ENCODE measurements at regions of chr9 and their contacts with region 1.

Region 1: GRCh38 chr9:2014696-2015580 is at the start of gene SMARCA2:
- DNase-seq: peak; percentile 92 to 98 (median 97)
- ATAC-seq: peak; percentile 76 to 80
- H3K4me3 Mint-ChIP-seq: peak within 1 kb of the TSS; percentile 93 to 100 (median 99)
- H3K27ac Mint-ChIP-seq: peak within 1 kb of the TSS; percentile 95 to 100 (median 99)
- H3K4me1 Mint-ChIP-seq: peaks cover 15 to 39% (median 30%) of the 10 kb centered on the region in 4 donors
- H3K27me3 Mint-ChIP-seq: peaks cover 0 to 6% (median 0%) of the 10 kb centered on the region in 5 donors
- polyA plus RNA-seq, gene SMARCA2: 36.1 to 78.7 (median 37.9) TPM

Region 2: DNA sequence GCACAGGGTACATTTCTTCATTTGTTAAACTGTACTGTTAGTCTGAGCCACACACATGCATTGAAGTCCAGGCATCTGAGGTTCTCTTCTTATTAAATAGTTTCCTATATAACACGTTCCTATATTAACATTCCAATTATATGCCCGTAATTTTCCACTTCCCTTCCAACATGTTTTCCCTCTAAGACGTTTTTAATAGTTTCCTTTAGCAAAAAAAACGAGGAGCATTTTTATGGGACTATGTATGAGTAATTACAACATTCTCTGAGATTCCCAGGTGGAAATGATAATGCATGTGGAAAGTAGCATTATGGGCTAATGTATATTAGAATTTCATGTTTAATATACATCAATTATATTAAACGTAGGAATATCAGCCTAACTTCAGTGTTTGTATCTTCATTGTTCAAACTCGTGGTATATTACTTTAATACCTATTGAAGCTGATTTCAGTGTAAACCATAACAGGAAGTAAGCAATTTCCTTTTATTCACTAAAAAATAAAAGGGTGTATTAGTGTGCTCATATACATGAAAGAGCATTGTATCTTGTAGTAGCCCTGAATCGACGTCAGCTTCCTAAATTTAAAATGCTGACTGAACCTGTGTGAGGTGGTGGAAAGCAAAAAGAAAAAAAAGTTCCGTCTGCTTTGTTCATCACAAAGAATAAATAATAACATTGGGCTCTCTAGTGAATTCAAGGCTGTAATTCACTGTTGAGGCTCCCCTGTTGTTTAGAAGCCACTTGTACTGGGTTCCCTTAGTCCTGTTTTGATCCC is 11.5 kb after region 1 on chr9:
- POLR2A ChIA-PET with region 1: interaction called, 11 read pairs
- DNase-seq: peak in 3 of 10 donors; percentile 19 to 31 (median 28)
- ATAC-seq: peak; percentile 18 to 67
- H3K4me3 Mint-ChIP-seq: peak overlapping the region in 9 of 10 donors; percentile 10 to 76 (median 50)
- H3K27ac Mint-ChIP-seq: peak overlapping the region; percentile 18 to 85 (median 56)
- H3K4me1 Mint-ChIP-seq: peaks cover 61 to 99% (median 98%) of the 10 kb centered on the region in 4 donors
- H3K27me3 Mint-ChIP-seq: no peaks in the 10 kb centered on the region

Region 3: GRCh38 chr9:2053883-2054845 is 39.2 kb after region 1 on chr9:
- POLR2A ChIA-PET with region 1: interaction called, 71 read pairs
- DNase-seq: peak; percentile 29 to 90 (median 76)
- ATAC-seq: peak; percentile 98 to 99
- H3K4me3 Mint-ChIP-seq: peak overlapping the region; percentile 42 to 73 (median 67)
- H3K27ac Mint-ChIP-seq: peak overlapping the region; percentile 74 to 96 (median 94)
- H3K4me1 Mint-ChIP-seq: peaks cover 21 to 65% (median 49%) of the 10 kb centered on the region in 4 donors
- H3K27me3 Mint-ChIP-seq: no peaks in the 10 kb centered on the region

Region 4: GRCh38 chr9:2066312-2067273 is 51.7 kb after region 1 on chr9:
- POLR2A ChIA-PET with region 1: interaction called, 11 read pairs
- DNase-seq: peak in 4 of 10 donors; percentile 16 to 48 (median 32)
- ATAC-seq: peak; percentile 75 to 76
- H3K4me3 Mint-ChIP-seq: no peak overlapping the region
- H3K27ac Mint-ChIP-seq: peak overlapping the region in 6 of 10 donors; percentile 8 to 75 (median 44)
- H3K4me1 Mint-ChIP-seq: peaks cover 0 to 7% (median 6%) of the 10 kb centered on the region in 4 donors
- H3K27me3 Mint-ChIP-seq: no peaks in the 10 kb centered on the region

Region 5: DNA sequence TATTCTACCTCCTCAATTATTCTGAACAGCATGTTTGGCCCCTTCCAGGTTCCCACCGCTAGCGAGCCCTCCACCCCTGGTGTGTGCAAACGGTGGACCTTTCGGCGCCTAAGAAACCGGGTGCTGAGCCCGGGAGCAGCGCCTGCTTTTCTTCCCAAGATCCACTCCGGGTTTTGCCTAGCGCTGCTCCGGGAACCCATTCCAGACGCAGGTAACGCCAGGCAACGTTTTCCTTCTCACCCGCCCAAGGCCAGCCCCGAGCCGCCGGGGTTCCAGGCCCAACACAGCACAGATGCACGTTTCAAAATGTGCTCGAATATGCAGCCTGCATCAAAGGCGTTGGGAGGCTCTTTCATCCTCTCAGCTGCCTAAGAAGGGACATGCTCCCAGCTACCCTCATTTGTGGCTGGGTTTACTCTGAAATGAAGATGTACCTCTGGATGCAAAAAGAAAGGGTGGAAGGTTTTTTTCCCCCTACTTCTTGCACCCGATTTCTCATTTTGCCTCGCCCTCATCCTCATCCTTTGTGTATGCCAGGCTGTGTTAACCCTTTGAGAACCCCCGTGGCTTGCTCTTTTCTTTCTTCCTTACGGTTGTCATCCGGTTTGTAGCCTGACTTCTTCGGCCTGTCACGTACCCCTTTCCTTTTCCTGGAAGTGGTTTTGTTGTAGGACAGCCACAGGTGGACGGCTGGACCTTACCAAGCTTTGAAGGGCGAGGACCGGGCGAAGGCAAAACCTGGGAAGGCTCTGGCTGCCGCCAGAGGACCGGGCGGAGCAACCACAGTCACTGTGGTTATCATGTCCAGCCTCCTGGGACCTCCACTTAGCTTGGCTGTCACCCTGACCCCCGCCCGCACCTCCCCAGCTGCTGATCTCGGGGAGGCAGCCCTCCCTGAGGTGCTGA is 227.2 kb after region 1 on chr9:
- POLR2A ChIA-PET with region 1: no interaction called
- DNase-seq: peak in 9 of 10 donors; percentile 7 to 52 (median 20)
- ATAC-seq: peak; percentile 82 to 85
- H3K4me3 Mint-ChIP-seq: peak overlapping the region; percentile 61 to 80 (median 76)
- H3K27ac Mint-ChIP-seq: peak overlapping the region in 3 of 10 donors; percentile 52 to 61 (median 55)
- H3K4me1 Mint-ChIP-seq: peaks cover 9 to 18% (median 16%) of the 10 kb centered on the region in 4 donors
- H3K27me3 Mint-ChIP-seq: peaks cover 12 to 55% (median 16%) of the 10 kb centered on the region in 5 donors